ENCODE measurements at regions of chr4 and their contacts with region 1.

Region 1: DNA sequence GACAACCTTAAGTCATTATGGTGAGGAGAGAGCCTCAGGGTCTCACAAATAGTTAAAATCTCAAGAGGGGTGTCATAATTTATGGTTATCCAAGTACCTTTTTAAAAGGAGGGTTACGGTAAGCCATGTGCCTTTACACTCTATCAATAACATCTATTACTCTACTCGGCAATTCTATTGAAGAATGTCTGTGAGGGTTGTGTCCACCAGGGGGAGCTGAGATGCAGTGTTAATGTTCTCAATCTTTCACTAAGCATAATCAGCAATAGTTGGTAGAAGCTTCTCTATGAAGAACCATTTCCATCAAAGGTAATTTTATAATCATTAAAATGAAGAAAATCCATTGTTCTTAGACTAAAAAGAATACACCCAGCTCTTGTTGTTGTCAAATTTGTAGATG is 457.4 kb downstream of the CENPC start:
- DNase-seq: peak; percentile 14
- ATAC-seq: no peak
- H3K4me3 ChIP-seq: no peak overlapping the region
- H3K4me3 Mint-ChIP-seq: no peak overlapping the region
- H3K27ac ChIP-seq: no peak overlapping the region
- H3K27ac Mint-ChIP-seq: no peak overlapping the region
- H3K4me1 ChIP-seq: no peaks in the 10 kb centered on the region
- H3K4me1 Mint-ChIP-seq: no peaks in the 10 kb centered on the region
- H3K27me3 ChIP-seq: no peaks in the 10 kb centered on the region
- H3K27me3 Mint-ChIP-seq: no peaks in the 10 kb centered on the region
- CTCF ChIP-seq: peak; percentile 63

Region 2: GRCh38 chr4:67103001-67103747 is 15.3 kb after region 1 on chr4:
- CTCF ChIA-PET with region 1: interaction called, 12 read pairs
- POLR2A ChIA-PET with region 1: no interaction called
- intact Hi-C with region 1: no loop called
- DNase-seq: no peak
- ATAC-seq: no peak
- H3K4me3 ChIP-seq: no peak overlapping the region
- H3K4me3 Mint-ChIP-seq: no peak overlapping the region
- H3K27ac ChIP-seq: no peak overlapping the region
- H3K27ac Mint-ChIP-seq: no peak overlapping the region
- H3K4me1 ChIP-seq: no peaks in the 10 kb centered on the region
- H3K4me1 Mint-ChIP-seq: no peaks in the 10 kb centered on the region
- H3K27me3 ChIP-seq: no peaks in the 10 kb centered on the region
- H3K27me3 Mint-ChIP-seq: no peaks in the 10 kb centered on the region
- CTCF ChIP-seq: no peak

Region 3: GRCh38 chr4:67327262-67328017 is 239.5 kb after region 1 on chr4:
- CTCF ChIA-PET with region 1: interaction called, 18 read pairs
- POLR2A ChIA-PET with region 1: no interaction called
- intact Hi-C with region 1: no loop called
- DNase-seq: peak; percentile 58
- ATAC-seq: peak; percentile 64
- H3K4me3 ChIP-seq: no peak overlapping the region
- H3K4me3 Mint-ChIP-seq: no peak overlapping the region
- H3K27ac ChIP-seq: no peak overlapping the region
- H3K27ac Mint-ChIP-seq: no peak overlapping the region
- H3K4me1 ChIP-seq: no peaks in the 10 kb centered on the region
- H3K4me1 Mint-ChIP-seq: no peaks in the 10 kb centered on the region
- H3K27me3 ChIP-seq: peaks cover 0 to 9% (median 2%) of the 10 kb centered on the region in 4 experiments
- H3K27me3 Mint-ChIP-seq: peaks cover 11% of the 10 kb centered on the region
- CTCF ChIP-seq: peak; percentile 96

Measured in B cell (primary cell).